Common myeloid progenitor, CD34-positive (primary cell): ENCODE measurements at regions of chr19 and their contacts with region 1.

Region 1: DNA sequence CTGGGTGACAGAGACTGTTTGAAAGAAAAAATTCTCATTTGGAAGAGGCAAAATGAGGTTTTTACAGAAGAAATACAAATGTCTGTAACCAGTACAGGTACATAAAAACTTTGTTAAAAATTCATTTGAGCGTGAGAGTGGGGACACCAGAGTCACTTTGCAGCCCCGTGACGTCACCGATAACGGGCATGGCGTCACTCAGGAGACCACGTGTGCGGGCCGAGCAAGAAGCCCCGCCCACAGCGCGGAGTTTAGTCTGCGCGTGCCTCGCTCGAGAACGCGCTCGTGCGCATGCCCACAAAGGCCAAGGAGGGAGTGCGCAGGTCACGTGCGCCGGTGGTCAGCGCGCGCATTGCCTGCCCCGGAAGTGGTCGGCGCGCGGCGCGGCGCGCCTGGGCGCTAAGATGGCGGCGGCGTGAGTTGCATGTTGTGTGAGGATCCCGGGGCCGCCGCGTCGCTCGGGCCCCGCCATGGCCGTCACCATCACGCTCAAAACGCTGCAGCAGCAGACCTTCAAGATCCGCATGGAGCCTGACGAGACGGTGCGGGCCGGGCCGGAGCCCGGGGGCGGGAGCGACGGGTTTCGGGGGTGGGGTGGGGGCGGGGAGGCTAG is at the start of gene RAD23A:
- DNase-seq: peak; percentile 98 to 99 (median 98)
- H3K4me3 ChIP-seq: peak within 1 kb of the TSS; percentile 40 to 97 (median 87)
- H3K27ac ChIP-seq: peak within 1 kb of the TSS; percentile 86 to 92
- H3K4me1 ChIP-seq: peaks cover 0 to 49% (median 37%) of the 10 kb centered on the region in 4 experiments
- H3K27me3 ChIP-seq: no peaks in the 10 kb centered on the region

Region 2: DNA sequence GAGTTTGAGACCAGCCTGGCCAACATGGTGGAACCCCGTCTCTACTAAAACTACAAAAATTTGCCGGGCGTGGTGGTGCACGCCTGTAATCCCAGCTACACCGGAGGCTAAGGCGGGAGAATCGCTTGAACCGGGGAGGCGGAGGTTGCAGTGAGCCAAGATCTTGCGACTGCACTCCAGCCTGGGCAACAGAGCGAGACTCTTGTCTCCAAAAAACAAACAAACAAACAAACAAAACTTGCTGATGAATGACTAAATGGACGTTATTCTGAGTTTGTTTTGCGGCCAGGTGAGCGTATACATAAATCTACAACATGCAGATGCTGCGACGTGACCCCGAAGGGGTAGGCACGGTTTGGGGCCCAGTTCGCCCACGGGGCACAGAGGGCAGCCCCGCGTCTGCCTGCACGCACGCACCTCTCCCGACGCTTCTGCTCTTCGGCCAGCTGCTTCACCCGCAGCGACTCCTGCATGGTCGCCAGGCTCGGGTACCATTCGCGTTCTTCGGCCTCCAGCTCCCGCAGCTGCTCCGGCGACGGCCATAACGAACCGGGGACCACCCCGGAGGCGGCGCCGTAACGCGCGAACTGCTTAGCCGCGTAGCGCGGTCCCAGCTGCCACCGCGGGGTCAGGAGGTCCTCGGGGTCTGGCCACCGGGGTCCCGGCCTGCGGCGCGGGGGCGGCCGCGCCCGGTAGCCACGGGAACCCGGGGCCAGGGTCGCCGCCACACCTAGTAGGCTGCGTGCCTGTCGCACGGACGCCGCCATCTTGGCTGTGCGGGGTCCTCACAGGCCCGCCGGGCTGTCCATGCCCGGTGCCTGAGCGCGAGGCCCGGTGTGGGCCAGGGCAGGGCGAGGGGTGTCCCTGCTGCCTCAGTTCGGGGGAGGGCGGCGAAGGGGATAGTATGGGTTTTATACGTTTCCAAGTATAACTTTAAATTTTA is 11.1 kb after region 1 on chr19 and contains the start of gene GADD45GIP1:
- CTCF ChIA-PET with region 1: no interaction called
- POLR2A ChIA-PET with region 1: interaction called, 11 read pairs
- DNase-seq: peak; percentile 78 to 88 (median 84)
- H3K4me3 ChIP-seq: peak within 1 kb of the TSS; percentile 71 to 96 (median 89)
- H3K27ac ChIP-seq: peak within 1 kb of the TSS; percentile 61 to 87
- H3K4me1 ChIP-seq: peaks cover 0 to 53% (median 48%) of the 10 kb centered on the region in 4 experiments
- H3K27me3 ChIP-seq: no peaks in the 10 kb centered on the region